ENCODE measurements at regions of chr4 and their contacts with region 1.

Region 1: DNA sequence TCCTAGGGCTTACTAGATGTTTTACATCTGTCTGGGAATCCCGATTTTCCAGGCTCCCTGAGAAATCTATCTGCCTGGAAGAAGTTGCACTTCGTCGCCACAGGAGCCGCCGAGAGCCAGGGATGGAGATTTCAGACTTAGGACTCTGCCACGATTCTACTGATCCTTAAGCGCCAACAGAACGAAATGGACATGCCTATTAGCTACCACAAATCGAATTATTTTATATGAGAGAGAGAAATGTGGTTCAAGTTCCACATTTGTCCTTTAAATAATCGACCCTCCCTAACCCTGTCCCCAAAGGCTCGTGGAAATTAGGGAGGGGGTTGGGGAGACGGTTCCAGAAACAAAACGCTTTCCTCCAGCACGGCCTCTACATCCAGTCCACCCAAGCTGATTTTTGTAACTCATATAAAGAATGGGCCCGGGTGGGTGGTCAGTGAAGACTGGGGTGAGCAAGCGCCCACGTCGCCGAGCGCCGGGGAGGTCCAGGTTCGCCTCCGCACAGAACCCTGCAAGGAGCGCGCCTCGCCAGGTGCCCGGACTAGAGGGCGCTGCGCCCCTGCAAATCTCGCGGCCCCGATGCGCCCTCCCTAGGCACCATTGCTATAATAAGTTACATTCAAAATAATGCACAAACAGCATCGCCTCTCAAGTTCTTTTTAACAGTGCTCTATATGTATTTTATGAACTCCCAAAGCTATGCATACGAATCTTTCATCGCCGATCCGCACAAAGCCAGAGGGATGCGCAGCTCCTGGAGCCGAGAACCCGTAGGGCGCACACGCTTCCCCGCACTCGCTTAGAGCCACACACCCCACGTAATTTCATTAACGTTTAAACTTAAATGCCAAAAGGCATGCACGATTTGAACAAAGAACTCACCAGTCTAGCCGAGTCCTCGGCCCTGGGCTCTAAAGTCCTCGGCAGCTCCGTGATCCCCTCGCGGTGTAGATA is 2.1 kb upstream of the FAT1 start:
- DNase-seq: peak; percentile 68
- ATAC-seq: peak; percentile 74
- H3K4me3 ChIP-seq: peak overlapping the region; percentile 69 to 99 (median 95)
- H3K27ac ChIP-seq: peak overlapping the region; percentile 86
- H3K4me1 ChIP-seq: peaks cover 50% of the 10 kb centered on the region
- H3K27me3 ChIP-seq: no peaks in the 10 kb centered on the region; a peak in 1 of 5 replicates
- CTCF ChIP-seq: peak; percentile 95
- EP300 ChIP-seq: no peak
- POLR2A ChIP-seq: no peak
- RAD21 ChIP-seq: peak; percentile 91

Region 2: DNA sequence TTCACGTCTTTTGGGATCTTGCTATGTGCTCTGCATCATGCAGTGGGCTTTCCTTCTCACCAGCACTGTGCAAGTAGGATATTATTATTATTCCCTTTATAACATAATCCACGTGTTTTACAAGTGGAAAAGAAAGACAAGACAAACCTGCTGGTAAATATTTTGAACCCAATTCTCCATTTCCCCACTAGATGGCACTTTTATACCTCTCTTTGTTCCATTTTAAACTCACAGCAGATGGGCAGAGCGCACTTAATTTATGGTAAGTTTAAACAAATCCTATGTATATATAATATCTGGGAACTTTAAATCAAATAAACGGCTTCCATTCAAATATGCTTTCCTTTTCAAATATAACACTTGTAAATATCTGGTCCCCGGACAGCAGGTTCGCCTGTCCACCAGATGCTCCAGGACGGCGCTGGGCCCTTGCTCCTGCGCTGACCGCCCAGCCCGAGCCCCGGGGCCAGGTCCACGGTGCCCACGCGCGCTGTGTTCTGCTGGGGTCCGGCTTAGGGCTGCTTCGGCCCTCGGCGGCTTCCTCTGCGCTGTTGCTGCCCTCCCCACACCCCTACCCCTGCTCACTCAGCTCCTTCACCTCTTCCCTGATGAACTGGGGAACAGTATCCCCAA is 428.6 kb before region 1 on chr4:
- CTCF ChIA-PET with region 1: no interaction called
- POLR2A ChIA-PET with region 1: no interaction called
- in situ Hi-C with region 1: no loop called
- intact Hi-C with region 1: loop called (anchors 10 kb)
- DNase-seq: peak; percentile 32
- ATAC-seq: peak; percentile 24; the same call in 2 of the 3 replicates
- H3K4me3 ChIP-seq: no peak overlapping the region
- H3K27ac ChIP-seq: no peak overlapping the region
- H3K4me1 ChIP-seq: peaks cover 6% of the 10 kb centered on the region; the same call in 1 of the 2 replicates
- H3K27me3 ChIP-seq: peaks cover 0 to 9% of the 10 kb centered on the region in 2 experiments; a peak in 1 of 5 replicates
- CTCF ChIP-seq: peak; percentile 71
- EP300 ChIP-seq: no peak
- POLR2A ChIP-seq: no peak
- RAD21 ChIP-seq: peak; percentile 55; the same call in 1 of the 2 replicates

Region 3: DNA sequence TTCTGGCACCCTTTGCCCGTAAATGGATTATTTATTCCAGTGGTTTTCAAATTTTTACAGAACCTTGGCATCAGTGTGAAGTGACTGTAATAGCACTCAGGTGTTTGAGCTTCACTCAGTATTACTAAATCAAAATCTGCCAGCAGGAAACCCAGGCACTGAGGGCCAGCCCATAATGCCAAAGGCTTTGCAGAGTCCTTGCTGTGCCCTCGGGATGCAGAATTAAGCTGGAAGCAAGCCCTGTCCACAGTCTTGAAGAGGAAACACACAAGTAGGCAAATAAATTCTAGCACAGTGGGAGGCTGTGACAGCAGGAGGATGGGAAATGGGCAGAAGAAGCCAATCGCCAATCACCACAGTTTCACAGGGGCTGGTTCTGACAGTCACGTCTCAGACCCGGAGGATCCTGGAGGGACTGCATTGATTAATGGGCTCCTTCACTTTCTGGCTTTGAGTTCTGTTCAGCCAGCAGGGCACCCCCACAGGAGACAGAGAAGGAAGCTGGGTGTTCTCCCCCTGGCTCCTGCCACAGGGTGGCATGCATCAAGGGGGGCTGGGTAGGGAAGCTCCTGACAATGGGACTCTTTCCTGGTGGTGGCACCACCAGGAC is 309.2 kb before region 1 on chr4:
- CTCF ChIA-PET with region 1: no interaction called
- POLR2A ChIA-PET with region 1: no interaction called
- in situ Hi-C with region 1: no loop called
- intact Hi-C with region 1: no loop called
- DNase-seq: no peak
- ATAC-seq: no peak
- H3K4me3 ChIP-seq: no peak overlapping the region
- H3K27ac ChIP-seq: no peak overlapping the region
- H3K4me1 ChIP-seq: no peaks in the 10 kb centered on the region
- H3K27me3 ChIP-seq: peaks cover 1 to 27% of the 10 kb centered on the region in 2 experiments
- CTCF ChIP-seq: no peak
- EP300 ChIP-seq: no peak
- POLR2A ChIP-seq: no peak
- RAD21 ChIP-seq: no peak

Region 4: GRCh38 chr4:186536285-186536684 is 189.5 kb before region 1 on chr4:
- CTCF ChIA-PET with region 1: no interaction called
- POLR2A ChIA-PET with region 1: no interaction called
- in situ Hi-C with region 1: no loop called
- intact Hi-C with region 1: no loop called
- DNase-seq: peak; percentile 8
- ATAC-seq: peak; percentile 68
- H3K4me3 ChIP-seq: no peak overlapping the region
- H3K27ac ChIP-seq: no peak overlapping the region
- H3K4me1 ChIP-seq: no peaks in the 10 kb centered on the region
- H3K27me3 ChIP-seq: peaks cover 1 to 5% of the 10 kb centered on the region in 2 experiments; a peak in 2 of 5 replicates
- CTCF ChIP-seq: no peak
- EP300 ChIP-seq: no peak
- POLR2A ChIP-seq: no peak
- RAD21 ChIP-seq: no peak

Region 5: GRCh38 chr4:186685767-186686183 is 40.0 kb before region 1 on chr4:
- CTCF ChIA-PET with region 1: no interaction called
- POLR2A ChIA-PET with region 1: interaction called, 12 read pairs
- in situ Hi-C with region 1: no loop called
- intact Hi-C with region 1: loop called (anchors 1 kb)
- DNase-seq: peak; percentile 95
- ATAC-seq: peak; percentile 78
- H3K4me3 ChIP-seq: peak overlapping the region; percentile 4 to 64 (median 40); a peak in 4 of 6 replicates
- H3K27ac ChIP-seq: peak overlapping the region; percentile 89
- H3K4me1 ChIP-seq: peaks cover 93% of the 10 kb centered on the region
- H3K27me3 ChIP-seq: no peaks in the 10 kb centered on the region
- CTCF ChIP-seq: no peak
- EP300 ChIP-seq: peak in 1 of 2 experiments; percentile 86; a peak in 2 of 4 replicates
- POLR2A ChIP-seq: peak in 1 of 2 experiments; percentile 45; a peak in 1 of 4 replicates
- RAD21 ChIP-seq: no peak

Region 6: DNA sequence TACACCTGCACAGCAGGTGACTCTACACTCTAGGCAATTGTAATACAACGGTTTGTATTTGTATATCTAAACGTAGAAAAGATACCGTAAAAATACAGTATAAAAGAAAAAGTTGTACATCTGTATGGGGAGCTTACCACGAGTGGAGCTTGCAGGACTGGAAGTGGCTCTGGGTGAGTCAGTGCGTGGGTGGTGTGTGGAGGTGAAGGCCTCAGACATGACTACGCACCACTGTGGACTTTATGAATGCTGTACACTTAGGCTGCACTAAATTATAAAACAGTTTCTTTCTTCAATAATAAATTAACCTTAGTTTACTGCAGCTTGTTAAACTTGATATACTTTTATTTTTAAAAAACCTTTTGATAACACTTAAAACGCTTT is 82.9 kb after region 1 on chr4:
- CTCF ChIA-PET with region 1: no interaction called
- POLR2A ChIA-PET with region 1: interaction called, 4 read pairs
- in situ Hi-C with region 1: no loop called
- intact Hi-C with region 1: loop called (anchors 2 kb)
- DNase-seq: no peak
- ATAC-seq: peak; percentile 46; the same call in 1 of the 3 replicates
- H3K4me3 ChIP-seq: no peak overlapping the region
- H3K27ac ChIP-seq: no peak overlapping the region
- H3K4me1 ChIP-seq: peaks cover 68% of the 10 kb centered on the region
- H3K27me3 ChIP-seq: no peaks in the 10 kb centered on the region
- CTCF ChIP-seq: no peak
- EP300 ChIP-seq: no peak
- POLR2A ChIP-seq: no peak
- RAD21 ChIP-seq: no peak

Region 7: DNA sequence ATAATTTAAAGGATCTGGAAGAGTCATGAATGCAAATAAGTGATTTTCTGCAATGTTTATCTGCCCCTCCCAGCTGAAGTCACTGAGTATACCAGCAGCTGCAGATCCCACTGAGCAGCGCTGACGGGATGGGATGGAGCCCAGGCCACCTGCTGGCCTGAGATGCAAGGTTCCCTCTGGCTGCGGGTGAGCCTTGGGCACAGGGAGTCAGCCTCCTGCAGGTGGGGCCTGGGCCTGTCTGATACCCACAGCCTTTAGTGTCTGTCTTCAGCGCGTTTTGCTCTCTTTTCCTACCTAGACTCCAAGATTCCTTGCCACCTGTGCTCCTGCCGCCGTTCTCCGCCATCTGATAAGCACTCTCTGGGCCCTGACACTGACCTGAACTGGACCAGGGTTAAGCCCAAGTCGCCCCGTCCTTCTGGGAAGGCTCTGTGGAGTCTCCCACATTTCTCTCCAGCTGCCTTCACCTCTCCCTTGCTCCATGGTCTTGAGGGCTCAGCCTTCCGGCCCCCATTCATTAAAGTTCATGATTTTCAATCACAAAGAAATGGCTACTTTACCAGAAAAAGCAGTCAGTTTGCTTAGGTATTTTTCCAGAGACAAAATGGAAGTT is 221.0 kb after region 1 on chr4:
- CTCF ChIA-PET with region 1: interaction called, 22 read pairs
- POLR2A ChIA-PET with region 1: interaction called, 3 read pairs
- in situ Hi-C with region 1: loop called (anchors 25 kb)
- intact Hi-C with region 1: loop called (anchors 1 kb)
- DNase-seq: peak; percentile 78
- ATAC-seq: peak; percentile 99
- H3K4me3 ChIP-seq: peak overlapping the region; percentile 9 to 58 (median 11); a peak in 2 of 6 replicates
- H3K27ac ChIP-seq: no peak overlapping the region
- H3K4me1 ChIP-seq: peaks cover 54% of the 10 kb centered on the region
- H3K27me3 ChIP-seq: peaks cover 0 to 6% of the 10 kb centered on the region in 2 experiments; a peak in 1 of 5 replicates
- CTCF ChIP-seq: peak; percentile 93
- EP300 ChIP-seq: no peak
- POLR2A ChIP-seq: no peak
- RAD21 ChIP-seq: peak; percentile 95

Region 8: DNA sequence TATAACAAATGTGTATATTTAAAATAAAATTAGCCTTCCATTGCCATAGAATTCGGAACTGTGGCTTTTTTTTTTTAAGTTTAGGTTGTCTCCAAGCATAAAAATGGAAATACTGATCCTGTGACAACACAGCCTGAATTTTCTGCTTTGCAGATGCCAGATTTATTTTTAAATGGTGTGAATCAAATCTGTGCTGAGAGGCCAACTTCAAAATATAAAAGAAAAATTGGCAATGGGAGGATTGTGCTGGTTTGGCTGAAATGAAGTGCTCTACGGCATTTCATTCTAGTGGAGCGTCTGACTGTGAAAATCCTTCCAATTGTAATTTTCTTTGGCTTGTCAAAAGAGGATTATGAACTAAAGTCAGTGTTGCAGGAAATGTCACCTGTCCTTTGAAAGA is 689.5 kb after region 1 on chr4:
- CTCF ChIA-PET with region 1: no interaction called
- POLR2A ChIA-PET with region 1: no interaction called
- in situ Hi-C with region 1: no loop called
- intact Hi-C with region 1: loop called (anchors 10 kb)
- DNase-seq: no peak
- ATAC-seq: no peak
- H3K4me3 ChIP-seq: no peak overlapping the region
- H3K27ac ChIP-seq: no peak overlapping the region
- H3K4me1 ChIP-seq: no peaks in the 10 kb centered on the region
- H3K27me3 ChIP-seq: no peaks in the 10 kb centered on the region; a peak in 1 of 5 replicates
- CTCF ChIP-seq: no peak
- EP300 ChIP-seq: no peak
- POLR2A ChIP-seq: no peak
- RAD21 ChIP-seq: no peak